ENCODE measurements at regions of chr1 and their contacts with region 1.

Region 1: DNA sequence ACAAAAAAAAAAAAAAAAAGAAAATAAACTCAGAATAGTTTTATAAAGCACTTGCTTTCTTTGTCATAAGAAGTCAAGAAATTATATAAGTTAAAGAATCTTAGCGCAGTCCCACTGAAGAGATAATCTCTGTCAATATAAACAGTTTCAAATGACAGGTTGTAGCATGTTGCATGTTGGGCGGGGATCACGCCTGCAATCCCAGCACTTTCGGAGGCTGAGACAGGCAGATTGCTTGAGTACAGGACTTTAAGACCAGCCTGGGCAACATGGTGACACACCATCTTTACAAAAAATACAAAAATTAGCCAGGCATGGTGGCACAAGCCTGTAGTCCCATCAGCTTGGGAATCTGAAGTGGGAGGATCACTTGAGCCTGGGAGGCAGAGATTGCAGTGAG is 18.4 kb upstream of the INPP5B start:
- DNase-seq: no peak
- ATAC-seq: no peak
- H3K4me3 ChIP-seq: no peak overlapping the region
- H3K27ac ChIP-seq: no peak overlapping the region
- H3K4me1 ChIP-seq: no peaks in the 10 kb centered on the region
- H3K27me3 ChIP-seq: no peaks in the 10 kb centered on the region
- CTCF ChIP-seq: no peak
- POLR2A ChIP-seq: no peak
- RAD21 ChIP-seq: no peak

Region 2: GRCh38 chr1:37875834-37876233 is 89.5 kb before region 1 on chr1:
- CTCF ChIA-PET with region 1: no interaction called
- POLR2A ChIA-PET with region 1: no interaction called
- dilution Hi-C with region 1: no loop called
- in situ Hi-C with region 1: no loop called
- intact Hi-C with region 1: loop called (anchors 5 kb)
- DNase-seq: no peak
- ATAC-seq: peak; percentile 37; the same call in 1 of the 2 replicates
- H3K4me3 ChIP-seq: no peak overlapping the region
- H3K27ac ChIP-seq: no peak overlapping the region
- H3K4me1 ChIP-seq: no peaks in the 10 kb centered on the region
- H3K27me3 ChIP-seq: no peaks in the 10 kb centered on the region
- CTCF ChIP-seq: no peak
- POLR2A ChIP-seq: no peak
- RAD21 ChIP-seq: no peak

Measured in IMR-90 (cell line).